ENCODE measurements at regions of chr2 and their contacts with region 1.

Region 1: DNA sequence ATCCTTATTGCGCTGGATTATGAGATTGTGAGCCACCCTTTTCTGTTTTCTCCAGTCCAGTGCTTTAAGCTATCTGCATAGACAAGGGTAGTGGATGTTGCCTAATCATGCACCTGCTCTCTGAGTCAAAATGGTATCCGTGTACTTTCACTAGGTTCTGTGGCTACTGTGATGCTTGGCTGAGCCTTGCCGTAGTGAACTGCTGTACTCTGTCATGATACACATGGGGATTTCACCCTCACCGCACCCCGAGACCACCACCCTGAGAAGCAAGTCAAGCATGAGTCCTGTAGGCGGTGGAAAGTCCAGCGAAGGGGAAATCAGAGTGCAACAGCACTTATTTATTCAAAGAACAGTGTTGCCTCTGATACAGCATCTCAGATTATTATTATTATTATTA is 55.0 kb downstream of the ARHGAP25 start:
- DNase-seq: peak; percentile 97
- ATAC-seq: peak; percentile 99
- H3K4me3 ChIP-seq: no peak overlapping the region
- H3K27ac ChIP-seq: no peak overlapping the region
- H3K4me1 ChIP-seq: peaks cover 11% of the 10 kb centered on the region
- H3K27me3 ChIP-seq: peaks cover 5 to 7% of the 10 kb centered on the region in 2 experiments; a peak in 3 of 4 replicates
- CTCF ChIP-seq: no peak
- EP300 ChIP-seq: peak; percentile 36 to 51; a peak in 2 of 4 replicates
- POLR2A ChIP-seq: no peak
- RAD21 ChIP-seq: 0 out of 2 replicates have a peak, but pooled peaks have one; percentile 9

Region 2: DNA sequence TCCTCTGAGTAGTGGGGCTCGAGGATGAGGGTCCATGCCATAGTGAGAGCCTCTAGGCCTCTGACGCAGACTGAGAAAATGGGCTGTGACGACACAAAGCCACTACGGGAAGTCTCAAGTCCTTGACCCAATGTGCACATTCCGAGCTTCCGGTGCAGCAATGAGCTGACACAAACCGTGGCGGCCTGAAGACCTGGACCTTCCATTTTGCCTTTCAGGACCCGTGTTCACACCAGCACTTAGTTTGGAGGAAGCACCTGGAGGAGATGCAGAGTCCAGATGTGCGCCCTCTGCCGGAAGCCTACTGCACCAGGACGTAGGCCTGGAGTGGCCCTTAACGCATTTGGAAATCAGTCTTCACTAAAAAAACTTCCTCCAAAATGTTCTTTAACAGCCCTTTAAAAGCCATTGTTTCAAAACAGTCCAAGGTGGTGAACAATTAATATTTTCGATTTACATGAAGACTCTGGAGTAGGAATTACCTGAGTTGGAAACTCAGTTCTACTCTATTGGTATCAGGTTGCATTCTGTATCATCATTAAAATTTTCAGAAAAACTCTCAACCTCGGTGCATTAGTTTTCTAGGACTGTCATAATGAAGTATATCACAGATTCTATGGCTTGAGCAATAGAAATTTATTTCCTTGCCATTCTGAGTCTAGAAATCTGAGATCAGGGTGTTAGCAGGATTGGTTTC is 47.7 kb after region 1 on chr2:
- CTCF ChIA-PET with region 1: no interaction called
- POLR2A ChIA-PET with region 1: no interaction called
- RAD21 ChIA-PET with region 1: no interaction called
- SMC1A ChIA-PET with region 1: no interaction called
- in situ Hi-C with region 1: no loop called
- intact Hi-C with region 1: loop called (anchors 2 kb)
- DNase-seq: peak; percentile 13
- ATAC-seq: peak; percentile 91
- H3K4me3 ChIP-seq: no peak overlapping the region
- H3K27ac ChIP-seq: no peak overlapping the region
- H3K4me1 ChIP-seq: peaks cover 27% of the 10 kb centered on the region
- H3K27me3 ChIP-seq: peaks cover 0 to 2% of the 10 kb centered on the region in 2 experiments; a peak in 1 of 4 replicates
- CTCF ChIP-seq: peak; percentile 67 to 85 (median 84)
- EP300 ChIP-seq: no peak
- POLR2A ChIP-seq: no peak
- RAD21 ChIP-seq: peak; percentile 55

Measured in GM12878 (cell line).